ENCODE measurements at regions of chr4 and their contacts with region 1.

Region 1: GRCh38 chr4:76011700-76012387 is 4.5 kb upstream of the CXCL9 start:
- DNase-seq: peak in 3 of 5 donors; percentile 36 to 72 (median 55)
- ATAC-seq: peak; percentile 20 to 80 (median 74)
- H3K4me3 ChIP-seq: peak overlapping the region in 9 of 12 donors; percentile 1 to 41 (median 16)
- H3K27ac ChIP-seq: peak overlapping the region; percentile 65 to 92 (median 81)
- H3K4me1 ChIP-seq: peaks cover 0 to 46% (median 6%) of the 10 kb centered on the region in 12 donors
- H3K27me3 ChIP-seq: no peaks in the 10 kb centered on the region
- CTCF ChIP-seq: no peak
- POLR2A ChIP-seq: no peak

Region 2: GRCh38 chr4:76055016-76055415 is 43.2 kb after region 1 on chr4:
- intact Hi-C with region 1: loop called in 1 of 10 experiments (anchors 5 kb)
- DNase-seq: no peak
- ATAC-seq: no peak
- H3K4me3 ChIP-seq: no peak overlapping the region
- H3K27ac ChIP-seq: no peak overlapping the region
- H3K4me1 ChIP-seq: peaks cover 0 to 7% (median 0%) of the 10 kb centered on the region in 12 donors
- H3K27me3 ChIP-seq: peaks cover 0 to 15% (median 0%) of the 10 kb centered on the region in 9 donors
- CTCF ChIP-seq: no peak
- POLR2A ChIP-seq: no peak

Region 3: GRCh38 chr4:76213415-76214176 is 201.8 kb after region 1 on chr4 and contains the start of gene SCARB2:
- intact Hi-C with region 1: loop called in 1 of 10 experiments (anchors 5 kb)
- DNase-seq: peak; percentile 91 to 95 (median 93)
- ATAC-seq: peak; percentile 88 to 98 (median 94)
- H3K4me3 ChIP-seq: peak within 1 kb of the TSS; percentile 69 to 94 (median 80)
- H3K27ac ChIP-seq: peak within 1 kb of the TSS; percentile 80 to 99 (median 96)
- H3K4me1 ChIP-seq: peaks cover 19 to 69% (median 52%) of the 10 kb centered on the region in 12 donors
- H3K27me3 ChIP-seq: no peaks in the 10 kb centered on the region
- CTCF ChIP-seq: peak in 1 of 12 donors; percentile 6
- POLR2A ChIP-seq: peak in 1 of 2 donors; percentile 88
- total RNA-seq, gene SCARB2: 84.9 to 208 (median 96.0) TPM

Measured in heart left ventricle (tissue), 16 donors.